ENCODE measurements at regions of chr6 and their contacts with region 1.

Region 1: GRCh38 chr6:72622094-72622940 is 453 bp downstream of the KCNQ5 start:
- DNase-seq: peak; percentile 40
- ATAC-seq: peak; percentile 41

Region 2: DNA sequence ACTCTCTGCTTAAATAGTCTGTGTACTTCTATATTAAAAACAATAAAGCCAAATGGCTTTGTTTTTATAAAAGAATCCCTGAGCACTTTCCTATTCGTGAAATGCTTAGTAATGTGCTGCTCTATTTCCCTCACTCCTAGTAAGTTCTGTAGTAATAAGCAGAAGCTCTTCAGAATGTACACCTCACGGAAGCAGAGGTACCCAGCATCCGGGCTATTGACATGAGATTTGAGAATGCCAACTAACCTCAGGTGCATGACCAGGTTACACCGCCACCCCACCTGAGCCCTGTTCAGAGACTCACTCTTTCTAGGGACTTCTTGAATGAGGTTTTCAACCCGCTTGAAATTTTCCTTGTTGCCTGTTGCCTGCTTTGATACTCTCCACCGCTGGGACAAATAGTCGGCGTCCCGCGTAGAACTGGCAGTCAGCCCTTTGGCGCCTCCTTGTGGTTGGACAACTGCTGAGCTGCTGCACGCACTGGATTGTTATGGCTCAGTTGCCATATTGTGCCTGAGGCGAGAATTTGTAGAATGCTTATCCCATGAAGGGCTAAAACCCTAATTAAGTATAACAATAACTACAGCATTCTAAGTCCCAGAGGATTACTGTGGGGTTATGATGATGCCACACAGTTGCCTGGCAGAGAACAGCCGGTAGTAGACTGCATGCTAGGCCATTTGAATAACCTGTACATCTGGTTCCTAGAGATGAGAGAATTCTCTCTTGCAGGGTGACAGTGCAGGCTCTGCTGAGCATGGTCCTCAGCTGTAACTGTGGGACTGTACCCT is 507.5 kb after region 1 on chr6:
- intact Hi-C with region 1: loop called (anchors 10 kb)
- DNase-seq: peak; percentile 79
- ATAC-seq: peak; percentile 61

Measured in Right ventricle myocardium superior (tissue), 1 donor.